Stomach (tissue), 19 donors: ENCODE measurements at regions of chr11 and their contacts with region 1.

Region 1: DNA sequence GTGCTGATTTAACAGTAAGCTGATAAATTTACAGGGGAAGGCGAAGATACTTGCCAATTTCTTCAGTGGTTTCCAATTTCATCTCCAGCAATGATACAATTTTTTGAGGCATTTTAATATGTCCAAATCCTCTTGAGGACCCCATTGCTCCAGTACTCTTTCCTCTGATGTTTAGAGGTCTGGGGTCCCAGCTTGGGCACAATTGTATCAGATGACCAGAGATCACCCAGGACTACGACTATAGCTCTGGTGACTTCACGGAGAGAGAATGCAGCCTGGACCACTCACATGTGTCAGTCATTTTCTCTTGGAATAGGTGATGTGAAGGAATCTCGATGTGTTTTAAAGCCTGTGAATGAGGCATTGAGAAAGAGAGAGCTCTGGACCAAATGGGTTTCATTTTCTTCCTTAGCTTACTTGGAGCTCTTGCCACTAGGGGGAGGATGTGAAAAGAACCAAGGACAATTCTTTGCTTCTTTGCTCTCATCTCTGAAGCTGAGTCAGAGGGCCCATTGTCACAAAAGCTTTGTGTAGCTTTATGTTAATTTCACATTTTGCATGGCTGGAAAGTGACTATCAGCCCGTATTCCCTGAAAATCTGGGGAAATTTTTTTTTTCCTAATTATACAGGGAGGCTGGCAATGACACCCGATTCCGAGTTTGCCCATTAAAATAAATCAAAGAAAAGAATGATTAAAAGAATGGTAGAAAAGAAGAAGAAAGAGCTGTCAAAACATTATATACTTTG is 6.7 kb upstream of the CCDC90B start:
- DNase-seq: peak in 1 of 2 donors; percentile 83
- H3K4me3 ChIP-seq: peak overlapping the region in 2 of 4 donors; percentile 9 to 16
- H3K27ac ChIP-seq: no peak overlapping the region
- H3K4me1 ChIP-seq: peaks cover 0 to 9% (median 5%) of the 10 kb centered on the region in 4 donors
- H3K27me3 ChIP-seq: no peaks in the 10 kb centered on the region
- CTCF ChIP-seq: peak in 5 of 7 experiments; percentile 44 to 75 (median 62)
- EP300 ChIP-seq: no peak
- POLR2A ChIP-seq: no peak

Region 2: DNA sequence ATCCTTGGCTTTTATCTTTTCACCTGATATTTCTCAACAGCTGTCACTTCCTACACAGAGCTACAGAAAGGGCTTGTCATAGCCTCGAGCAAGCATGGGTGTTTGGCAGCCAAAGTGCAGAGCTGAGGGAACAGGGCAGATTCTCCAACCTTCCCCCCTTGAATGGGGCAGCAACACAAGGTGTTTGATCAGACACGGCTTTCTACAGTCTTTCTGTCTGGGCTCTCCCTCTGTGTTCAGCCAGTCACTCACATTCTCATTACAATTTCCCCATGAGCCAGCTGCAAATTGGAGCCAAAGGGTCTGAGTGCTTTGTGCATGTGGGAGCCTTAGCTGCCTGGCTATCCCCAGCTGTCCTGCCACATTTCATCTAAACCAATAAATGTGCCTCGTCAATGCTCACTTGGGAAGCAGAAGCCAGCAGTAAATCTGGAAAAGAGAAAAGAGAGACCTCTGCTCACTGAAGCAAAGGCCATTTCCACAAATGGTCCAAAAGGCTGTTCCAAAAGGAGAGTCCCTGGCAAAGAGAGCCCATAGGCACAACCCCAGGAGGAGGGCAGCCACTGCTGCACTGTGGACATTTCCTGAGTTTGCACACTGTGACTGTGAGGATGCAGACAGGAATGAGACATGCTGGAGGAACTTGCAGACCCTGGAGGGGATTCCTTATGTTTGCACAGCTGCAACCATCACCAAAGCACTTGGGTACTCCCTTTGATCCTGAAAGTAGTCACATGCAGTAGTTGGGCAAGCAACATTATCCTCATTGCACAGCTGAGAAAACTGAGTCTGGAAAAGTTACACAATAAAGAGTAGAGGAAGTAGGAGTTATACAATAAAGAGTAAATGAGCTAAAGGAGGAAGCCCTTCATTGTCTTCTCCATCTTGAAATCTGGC is 746.0 kb before region 1 on chr11:
- intact Hi-C with region 1: no loop called
- DNase-seq: no peak
- H3K4me3 ChIP-seq: no peak overlapping the region
- H3K27ac ChIP-seq: no peak overlapping the region
- H3K4me1 ChIP-seq: no peaks in the 10 kb centered on the region
- H3K27me3 ChIP-seq: no peaks in the 10 kb centered on the region
- CTCF ChIP-seq: no peak
- EP300 ChIP-seq: no peak
- POLR2A ChIP-seq: no peak

Region 3: GRCh38 chr11:83819933-83820549 is 527.2 kb after region 1 on chr11:
- intact Hi-C with region 1: loop called (anchors 5 kb)
- DNase-seq: peak in 1 of 2 donors; percentile 71
- H3K4me3 ChIP-seq: no peak overlapping the region
- H3K27ac ChIP-seq: no peak overlapping the region
- H3K4me1 ChIP-seq: no peaks in the 10 kb centered on the region
- H3K27me3 ChIP-seq: no peaks in the 10 kb centered on the region
- CTCF ChIP-seq: peak in 5 of 7 experiments; percentile 32 to 71 (median 50)
- EP300 ChIP-seq: no peak
- POLR2A ChIP-seq: no peak